ENCODE measurements at regions of chr1 and their contacts with region 1.

Region 1: GRCh38 chr1:58155418-58156123 is 391.0 kb downstream of the OMA1 start:
- DNase-seq: no peak
- H3K4me3 ChIP-seq: no peak overlapping the region
- H3K27ac ChIP-seq: no peak overlapping the region
- H3K4me1 ChIP-seq: no peaks in the 10 kb centered on the region
- H3K27me3 ChIP-seq: no peaks in the 10 kb centered on the region
- CTCF ChIP-seq: peak; percentile 40

Region 2: GRCh38 chr1:56831871-56832693 is 1323.5 kb before region 1 on chr1:
- intact Hi-C with region 1: loop called (anchors 10 kb)
- DNase-seq: peak; percentile 61
- H3K4me3 ChIP-seq: no peak overlapping the region
- H3K27ac ChIP-seq: no peak overlapping the region
- H3K4me1 ChIP-seq: no peaks in the 10 kb centered on the region
- H3K27me3 ChIP-seq: no peaks in the 10 kb centered on the region
- CTCF ChIP-seq: peak; percentile 95

Region 3: DNA sequence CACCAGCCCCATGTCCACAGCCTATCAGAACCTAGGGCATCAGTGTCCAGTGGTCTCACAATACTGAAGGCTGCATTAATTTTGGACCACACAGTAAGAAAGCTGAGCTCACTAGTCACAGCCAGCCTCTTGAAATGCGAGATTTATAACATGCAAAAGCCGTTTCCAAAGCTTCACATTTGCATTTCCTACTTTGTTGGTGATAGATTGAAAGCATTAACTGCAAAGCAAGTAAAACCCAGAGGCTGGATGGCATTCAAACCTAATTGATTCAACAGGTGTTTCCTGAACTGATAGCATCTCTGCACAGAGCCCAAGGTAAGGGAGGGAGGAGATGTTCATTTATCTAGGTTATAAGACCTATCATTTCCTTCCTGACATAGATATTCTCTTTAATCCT is 19.2 kb before region 1 on chr1:
- intact Hi-C with region 1: no loop called
- DNase-seq: no peak
- H3K4me3 ChIP-seq: no peak overlapping the region
- H3K27ac ChIP-seq: no peak overlapping the region
- H3K4me1 ChIP-seq: no peaks in the 10 kb centered on the region
- H3K27me3 ChIP-seq: no peaks in the 10 kb centered on the region
- CTCF ChIP-seq: no peak

Measured in colonic mucosa (tissue), 4 donors.